Body of pancreas (tissue), 4 donors: ENCODE measurements at regions of chr14 and their contacts with region 1.

Region 1: DNA sequence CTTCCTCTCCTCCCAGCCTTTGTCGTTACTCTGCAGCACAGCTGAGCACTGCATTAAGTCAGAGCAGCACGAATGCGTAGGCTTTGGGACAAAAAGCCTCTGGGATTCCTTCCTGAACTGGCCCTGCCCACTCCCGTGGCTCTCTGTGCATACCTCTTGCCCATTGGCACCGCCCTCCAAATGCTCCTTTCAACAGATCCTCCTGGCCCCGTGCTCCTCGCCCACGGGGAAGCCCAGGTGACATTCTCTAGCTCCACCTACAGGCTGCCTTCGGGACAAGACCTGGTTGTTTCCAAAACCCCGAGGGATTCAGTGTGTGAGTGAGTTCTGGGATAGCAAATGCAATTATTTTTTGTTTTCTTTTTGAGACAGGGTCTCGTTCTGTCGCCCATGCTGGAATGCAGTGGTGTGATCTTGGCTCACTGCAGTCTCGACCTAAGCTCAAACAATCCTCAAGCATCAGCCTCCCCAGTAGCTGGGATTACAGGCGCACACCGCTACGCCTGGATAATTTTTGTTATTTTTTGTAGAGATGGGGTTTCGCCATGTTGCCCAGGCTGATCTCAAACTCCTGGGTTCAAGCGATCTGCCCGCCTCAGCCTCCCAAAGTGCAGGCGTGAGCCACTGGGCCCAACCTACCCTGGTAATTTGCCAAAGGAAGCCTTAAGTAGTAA is 17.9 kb upstream of the TDRD9 start:
- DNase-seq: peak; percentile 91 to 96 (median 96)
- ATAC-seq: peak; percentile 99
- H3K4me3 ChIP-seq: no peak overlapping the region
- H3K27ac ChIP-seq: peak overlapping the region; percentile 8 to 71 (median 48)
- H3K4me1 ChIP-seq: peaks cover 11% of the 10 kb centered on the region
- H3K27me3 ChIP-seq: no peaks in the 10 kb centered on the region
- CTCF ChIP-seq: peak; percentile 71 to 97 (median 95)
- POLR2A ChIP-seq: peak in 1 of 3 donors; percentile 36

Region 2: DNA sequence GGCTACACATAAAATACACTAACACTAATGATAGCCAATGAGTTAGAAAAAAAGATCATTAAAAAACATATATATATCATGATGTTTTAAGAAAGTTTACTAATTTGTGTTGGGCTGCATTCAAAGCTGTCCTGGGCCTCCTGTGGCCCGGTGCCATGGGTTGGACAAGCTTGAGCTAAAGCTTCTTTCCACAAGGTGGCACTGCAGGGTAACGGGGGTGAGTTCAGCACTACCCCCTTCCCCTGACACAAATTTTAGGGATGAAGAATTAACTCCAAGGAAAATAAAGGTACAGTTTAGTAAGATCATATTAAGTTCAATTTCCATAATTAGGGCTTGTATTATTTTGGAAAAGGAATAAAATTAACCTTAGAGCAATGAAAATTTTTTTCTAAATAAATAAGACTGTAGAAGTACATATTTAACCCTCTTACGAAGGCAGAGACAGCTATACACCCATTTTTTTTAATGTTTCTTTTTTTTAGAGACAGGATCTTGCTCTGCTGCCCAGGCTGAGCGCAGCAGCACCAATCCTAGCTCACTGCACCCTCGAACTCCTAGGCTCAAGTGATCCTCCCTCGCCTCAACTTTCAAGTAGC is 101.9 kb before region 1 on chr14:
- intact Hi-C with region 1: loop called (anchors 5 kb)
- DNase-seq: peak; percentile 83 to 90 (median 86)
- ATAC-seq: peak; percentile 85
- H3K4me3 ChIP-seq: no peak overlapping the region
- H3K27ac ChIP-seq: no peak overlapping the region
- H3K4me1 ChIP-seq: peaks cover 44% of the 10 kb centered on the region
- H3K27me3 ChIP-seq: no peaks in the 10 kb centered on the region
- CTCF ChIP-seq: peak; percentile 84 to 95 (median 91)
- POLR2A ChIP-seq: no peak